ENCODE measurements at regions of chr2 and their contacts with region 1.

Region 1: DNA sequence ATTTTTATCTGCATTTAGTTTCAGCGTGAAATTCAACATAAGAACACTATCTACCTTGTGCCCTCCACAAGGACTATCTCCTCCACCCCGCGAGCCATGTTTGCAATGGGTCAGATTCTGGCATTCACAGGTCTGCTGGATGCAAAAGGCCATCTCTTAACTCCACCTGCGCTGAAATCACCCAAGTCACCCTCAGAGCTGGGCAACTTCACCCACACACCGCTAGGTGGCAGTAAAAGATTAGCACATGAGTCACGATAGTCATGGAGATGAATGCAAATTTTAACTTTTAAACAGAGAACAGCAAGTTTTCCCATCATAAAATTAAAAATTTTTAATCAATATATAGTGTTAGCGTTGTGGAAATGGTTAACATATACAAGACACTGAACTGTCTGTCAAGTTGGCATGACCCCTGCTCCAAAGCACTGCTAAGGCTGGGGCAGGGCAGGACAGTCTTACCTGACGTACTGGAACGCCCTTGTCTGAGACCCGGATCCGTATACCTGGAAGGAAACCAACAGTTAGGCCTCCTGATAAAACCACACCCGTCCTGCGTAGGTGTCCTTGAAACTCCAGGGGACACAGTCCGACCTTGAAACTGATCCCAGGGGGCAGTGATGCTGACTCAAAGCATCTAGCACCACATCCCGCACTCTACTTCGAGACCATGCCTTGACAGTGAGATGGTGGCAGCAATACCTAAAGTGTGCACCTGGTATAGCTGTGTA is 89.6 kb downstream of the UXS1 start:
- DNase-seq: peak; percentile 46
- H3K4me3 ChIP-seq: no peak overlapping the region
- H3K27ac ChIP-seq: no peak overlapping the region
- H3K4me1 ChIP-seq: peaks cover 3% of the 10 kb centered on the region
- H3K27me3 ChIP-seq: no peaks in the 10 kb centered on the region
- CTCF ChIP-seq: peak; percentile 95 to 99

Region 2: GRCh38 chr2:105576440-105577252 is 527.9 kb before region 1 on chr2:
- CTCF ChIA-PET with region 1: no interaction called
- dilution Hi-C with region 1: no loop called
- in situ Hi-C with region 1: loop called (anchors 10 to 25 kb)
- intact Hi-C with region 1: loop called (anchors 2 kb)
- DNase-seq: peak; percentile 77
- H3K4me3 ChIP-seq: no peak overlapping the region
- H3K27ac ChIP-seq: peak overlapping the region; percentile 81
- H3K4me1 ChIP-seq: peaks cover 31% of the 10 kb centered on the region
- H3K27me3 ChIP-seq: no peaks in the 10 kb centered on the region
- CTCF ChIP-seq: peak; percentile 69 to 74

Region 3: GRCh38 chr2:105873721-105874120 is 230.8 kb before region 1 on chr2:
- CTCF ChIA-PET with region 1: no interaction called
- dilution Hi-C with region 1: no loop called
- in situ Hi-C with region 1: no loop called
- intact Hi-C with region 1: no loop called
- DNase-seq: peak; percentile 85
- H3K4me3 ChIP-seq: no peak overlapping the region
- H3K27ac ChIP-seq: no peak overlapping the region
- H3K4me1 ChIP-seq: peaks cover 10% of the 10 kb centered on the region
- H3K27me3 ChIP-seq: no peaks in the 10 kb centered on the region
- CTCF ChIP-seq: no peak

Region 4: DNA sequence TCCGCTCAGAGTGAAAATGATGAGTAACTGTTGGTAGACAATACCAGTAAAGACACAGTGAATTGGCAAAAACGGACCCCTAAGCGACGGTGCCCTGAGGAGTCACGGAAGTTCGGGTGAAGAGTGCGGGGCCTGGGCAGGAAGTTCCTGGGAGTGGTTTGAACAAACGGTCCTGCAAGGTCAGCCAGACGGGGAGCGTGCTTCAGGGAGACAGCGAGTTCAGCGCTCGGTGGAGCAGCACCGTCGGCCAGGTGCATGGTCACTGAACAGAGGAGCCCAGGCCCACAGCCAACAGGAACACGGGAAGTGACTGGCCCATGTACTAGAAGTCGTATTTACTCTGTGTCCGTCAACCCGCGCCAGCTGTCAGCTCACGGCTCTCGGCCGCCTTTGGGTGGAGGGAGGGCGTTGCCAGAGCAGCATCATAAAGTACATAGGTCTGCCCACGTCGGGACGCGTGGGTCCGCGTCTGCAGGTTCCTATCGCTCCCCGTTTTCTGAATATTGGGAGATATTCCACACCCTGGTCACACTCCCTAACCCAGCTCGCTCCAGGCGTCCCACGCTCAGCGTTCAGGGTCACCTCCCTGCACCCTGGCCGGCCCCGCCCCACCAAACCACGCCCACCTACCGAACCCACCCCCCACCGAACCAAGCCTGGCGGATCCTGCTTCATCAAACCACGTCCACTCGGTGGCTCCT is 165.2 kb after region 1 on chr2:
- CTCF ChIA-PET with region 1: no interaction called
- dilution Hi-C with region 1: no loop called
- in situ Hi-C with region 1: no loop called
- intact Hi-C with region 1: loop called (anchors 10 kb)
- DNase-seq: no peak
- H3K4me3 ChIP-seq: peak overlapping the region in 1 of 3 experiments; percentile 16
- H3K27ac ChIP-seq: no peak overlapping the region
- H3K4me1 ChIP-seq: peaks cover 15% of the 10 kb centered on the region
- H3K27me3 ChIP-seq: no peaks in the 10 kb centered on the region
- CTCF ChIP-seq: no peak

Region 5: GRCh38 chr2:106307860-106308259 is 203.4 kb after region 1 on chr2:
- CTCF ChIA-PET with region 1: no interaction called
- dilution Hi-C with region 1: no loop called
- in situ Hi-C with region 1: no loop called
- intact Hi-C with region 1: no loop called
- DNase-seq: no peak
- H3K4me3 ChIP-seq: no peak overlapping the region
- H3K27ac ChIP-seq: no peak overlapping the region
- H3K4me1 ChIP-seq: no peaks in the 10 kb centered on the region
- H3K27me3 ChIP-seq: peaks cover 2% of the 10 kb centered on the region
- CTCF ChIP-seq: no peak

Region 6: GRCh38 chr2:106537047-106537446 is 432.6 kb after region 1 on chr2:
- CTCF ChIA-PET with region 1: no interaction called
- dilution Hi-C with region 1: loop called (anchors 25 kb)
- in situ Hi-C with region 1: loop called (anchors 10 to 25 kb)
- intact Hi-C with region 1: loop called (anchors 2 kb)
- DNase-seq: no peak
- H3K4me3 ChIP-seq: no peak overlapping the region
- H3K27ac ChIP-seq: no peak overlapping the region
- H3K4me1 ChIP-seq: no peaks in the 10 kb centered on the region
- H3K27me3 ChIP-seq: no peaks in the 10 kb centered on the region
- CTCF ChIP-seq: no peak

Region 7: GRCh38 chr2:106582148-106583143 is 477.9 kb after region 1 on chr2:
- CTCF ChIA-PET with region 1: interaction called, 35 read pairs
- dilution Hi-C with region 1: no loop called
- in situ Hi-C with region 1: no loop called
- intact Hi-C with region 1: loop called (anchors 2 kb)
- DNase-seq: peak; percentile 53
- H3K4me3 ChIP-seq: peak overlapping the region; percentile 10 to 31 (median 31)
- H3K27ac ChIP-seq: no peak overlapping the region
- H3K4me1 ChIP-seq: peaks cover 6% of the 10 kb centered on the region
- H3K27me3 ChIP-seq: peaks cover 4% of the 10 kb centered on the region
- CTCF ChIP-seq: peak; percentile 80 to 96